ENCODE measurements at regions of chr20 and their contacts with region 1.

Region 1: DNA sequence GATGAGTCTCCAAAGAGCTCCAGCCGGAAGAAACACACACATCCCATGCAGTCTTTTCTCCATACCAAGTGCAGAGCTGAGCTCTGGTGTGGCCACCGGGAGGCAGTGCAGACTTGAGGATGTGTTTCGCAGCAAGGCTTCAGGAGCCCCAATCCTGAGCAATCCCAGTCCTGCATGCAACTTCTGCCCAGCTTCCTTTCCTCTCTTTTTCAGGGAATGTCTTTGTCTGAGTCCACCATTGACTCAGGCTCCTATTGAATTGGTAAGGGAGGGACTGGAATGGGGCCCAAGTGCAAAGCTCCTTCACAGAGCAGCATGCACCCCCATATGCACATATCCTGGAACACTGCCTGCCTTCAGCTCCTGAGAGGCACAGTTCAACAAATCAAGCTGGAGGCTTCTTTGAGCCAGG is 50.5 kb upstream of the ASIP start:
- DNase-seq: peak in 6 of 9 donors; percentile 12 to 38 (median 28)
- ATAC-seq: peak; percentile 60
- H3K4me3 ChIP-seq: no peak overlapping the region
- H3K4me3 Mint-ChIP-seq: no peak overlapping the region
- H3K27ac ChIP-seq: no peak overlapping the region
- H3K27ac Mint-ChIP-seq: no peak overlapping the region
- H3K4me1 ChIP-seq: no peaks in the 10 kb centered on the region
- H3K4me1 Mint-ChIP-seq: peaks cover 0 to 12% (median 0%) of the 10 kb centered on the region in 7 donors
- H3K27me3 ChIP-seq: no peaks in the 10 kb centered on the region
- H3K27me3 Mint-ChIP-seq: peaks cover 0 to 50% (median 6%) of the 10 kb centered on the region in 5 donors

Region 2: GRCh38 chr20:34302723-34303528 is 112.2 kb after region 1 on chr20 and contains the start of gene AHCY:
- CTCF ChIA-PET with region 1: no interaction called
- POLR2A ChIA-PET with region 1: no interaction called
- intact Hi-C with region 1: loop called (anchors 1 to 2 kb)
- DNase-seq: peak; percentile 84 to 95 (median 92)
- ATAC-seq: peak; percentile 96
- H3K4me3 ChIP-seq: peak within 1 kb of the TSS; percentile 91
- H3K4me3 Mint-ChIP-seq: peak within 1 kb of the TSS; percentile 90 to 96 (median 91)
- H3K27ac ChIP-seq: peak within 1 kb of the TSS; percentile 87
- H3K27ac Mint-ChIP-seq: peak within 1 kb of the TSS; percentile 89 to 95 (median 93)
- H3K4me1 ChIP-seq: peaks cover 3 to 6% of the 10 kb centered on the region in 2 donors
- H3K4me1 Mint-ChIP-seq: peaks cover 0 to 27% (median 14%) of the 10 kb centered on the region in 7 donors
- H3K27me3 ChIP-seq: no peaks in the 10 kb centered on the region
- H3K27me3 Mint-ChIP-seq: peaks cover 0 to 2% (median 0%) of the 10 kb centered on the region in 5 donors
- total RNA-seq, gene AHCY: 19.1 to 62.9 (median 23.7) TPM

Region 3: DNA sequence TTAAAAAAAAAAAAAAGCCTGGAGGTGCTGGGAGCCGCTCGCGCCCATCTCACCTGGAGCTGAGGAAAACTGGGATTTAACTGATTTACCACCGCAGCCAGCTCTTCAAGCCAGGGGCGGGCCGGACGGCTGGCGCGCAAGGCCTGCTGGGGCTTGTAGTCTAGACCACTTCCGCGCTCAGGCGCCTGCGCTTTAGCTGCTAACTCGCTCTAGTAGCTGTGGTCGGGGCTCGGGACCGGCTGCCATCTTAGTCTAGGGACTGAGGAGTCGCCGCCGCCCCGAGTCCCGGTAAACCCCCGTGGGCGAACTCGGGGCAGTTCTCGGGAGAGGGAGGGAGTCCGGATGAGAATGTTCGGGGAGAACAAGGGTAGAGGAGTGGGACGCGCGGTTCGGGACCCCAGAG is 172.4 kb after region 1 on chr20 and contains the start of gene ITCH:
- CTCF ChIA-PET with region 1: no interaction called
- POLR2A ChIA-PET with region 1: no interaction called
- intact Hi-C with region 1: no loop called
- DNase-seq: peak; percentile 82 to 91 (median 88)
- ATAC-seq: peak; percentile 100
- H3K4me3 ChIP-seq: peak within 1 kb of the TSS; percentile 93
- H3K4me3 Mint-ChIP-seq: peak within 1 kb of the TSS; percentile 96 to 100 (median 98)
- H3K27ac ChIP-seq: peak within 1 kb of the TSS; percentile 98
- H3K27ac Mint-ChIP-seq: peak within 1 kb of the TSS; percentile 91 to 100 (median 98)
- H3K4me1 ChIP-seq: peaks cover 25 to 38% of the 10 kb centered on the region in 2 donors
- H3K4me1 Mint-ChIP-seq: peaks cover 26 to 50% (median 45%) of the 10 kb centered on the region in 7 donors
- H3K27me3 ChIP-seq: no peaks in the 10 kb centered on the region
- H3K27me3 Mint-ChIP-seq: peaks cover 0 to 3% (median 0%) of the 10 kb centered on the region in 5 donors
- total RNA-seq, gene ITCH: 50.8 to 70.4 (median 60.5) TPM

Region 4: DNA sequence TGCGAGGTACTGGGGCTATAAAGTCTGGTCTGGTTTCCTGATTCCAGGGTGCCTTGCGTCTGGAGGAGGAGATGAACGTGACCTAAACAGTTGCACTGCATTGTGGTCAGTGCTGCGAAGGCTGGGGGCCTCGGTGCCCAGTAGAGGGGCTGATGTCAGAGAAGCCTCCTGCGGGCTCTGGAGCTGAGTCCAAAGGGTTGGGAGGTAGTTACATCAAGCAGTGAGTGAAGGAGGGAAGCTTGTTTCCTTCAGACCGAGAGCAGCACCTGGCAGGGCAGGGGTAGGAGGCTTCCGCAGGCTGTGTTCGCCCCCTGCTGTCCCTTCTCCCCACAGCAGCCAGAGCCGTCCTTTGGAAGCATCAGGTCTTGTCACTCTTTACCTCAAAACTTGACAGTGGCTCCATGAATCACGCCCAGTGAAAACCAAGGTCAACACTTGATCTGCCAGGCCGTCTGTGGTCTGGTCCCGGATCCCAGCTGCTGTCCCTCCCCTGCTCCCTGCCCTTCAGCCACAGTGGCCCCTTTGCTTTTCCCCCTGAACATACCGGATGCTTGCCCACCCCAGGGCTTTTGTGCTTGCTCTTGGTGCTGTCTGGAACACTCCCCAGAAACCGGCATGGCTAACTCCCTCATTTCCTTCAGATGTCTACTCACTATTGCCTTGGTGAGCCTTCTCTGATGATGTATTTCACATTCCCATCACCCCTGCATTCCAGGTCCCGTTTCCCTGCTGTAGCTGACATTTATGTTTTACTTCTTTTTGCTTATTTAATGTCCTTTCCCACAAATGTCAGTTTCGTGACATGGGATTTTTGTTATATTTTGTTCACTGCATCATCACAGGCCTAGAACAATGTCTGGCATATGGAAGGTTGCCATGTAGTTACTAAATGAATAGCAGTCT is 332.5 kb after region 1 on chr20:
- CTCF ChIA-PET with region 1: no interaction called
- POLR2A ChIA-PET with region 1: no interaction called
- intact Hi-C with region 1: loop called in 1 of 2 experiments (anchors 1 kb)
- DNase-seq: peak; percentile 33 to 60 (median 43)
- ATAC-seq: peak; percentile 84
- H3K4me3 ChIP-seq: no peak overlapping the region
- H3K4me3 Mint-ChIP-seq: peak overlapping the region in 2 of 10 donors; percentile 1 to 76
- H3K27ac ChIP-seq: no peak overlapping the region
- H3K27ac Mint-ChIP-seq: peak overlapping the region in 5 of 9 donors; percentile 4 to 84 (median 58)
- H3K4me1 ChIP-seq: peaks cover 7 to 15% of the 10 kb centered on the region in 2 donors
- H3K4me1 Mint-ChIP-seq: peaks cover 24 to 69% (median 47%) of the 10 kb centered on the region in 7 donors
- H3K27me3 ChIP-seq: no peaks in the 10 kb centered on the region
- H3K27me3 Mint-ChIP-seq: no peaks in the 10 kb centered on the region

Region 5: GRCh38 chr20:34768096-34768495 is 577.4 kb after region 1 on chr20:
- CTCF ChIA-PET with region 1: interaction called, 4 read pairs
- POLR2A ChIA-PET with region 1: no interaction called
- intact Hi-C with region 1: loop called in 1 of 2 experiments (anchors 2 kb)
- DNase-seq: no peak
- ATAC-seq: no peak
- H3K4me3 ChIP-seq: no peak overlapping the region
- H3K4me3 Mint-ChIP-seq: no peak overlapping the region
- H3K27ac ChIP-seq: no peak overlapping the region
- H3K27ac Mint-ChIP-seq: no peak overlapping the region
- H3K4me1 ChIP-seq: no peaks in the 10 kb centered on the region
- H3K4me1 Mint-ChIP-seq: peaks cover 0 to 3% (median 0%) of the 10 kb centered on the region in 7 donors
- H3K27me3 ChIP-seq: no peaks in the 10 kb centered on the region
- H3K27me3 Mint-ChIP-seq: no peaks in the 10 kb centered on the region